ENCODE measurements at regions of chr4 and their contacts with region 1.

Region 1: DNA sequence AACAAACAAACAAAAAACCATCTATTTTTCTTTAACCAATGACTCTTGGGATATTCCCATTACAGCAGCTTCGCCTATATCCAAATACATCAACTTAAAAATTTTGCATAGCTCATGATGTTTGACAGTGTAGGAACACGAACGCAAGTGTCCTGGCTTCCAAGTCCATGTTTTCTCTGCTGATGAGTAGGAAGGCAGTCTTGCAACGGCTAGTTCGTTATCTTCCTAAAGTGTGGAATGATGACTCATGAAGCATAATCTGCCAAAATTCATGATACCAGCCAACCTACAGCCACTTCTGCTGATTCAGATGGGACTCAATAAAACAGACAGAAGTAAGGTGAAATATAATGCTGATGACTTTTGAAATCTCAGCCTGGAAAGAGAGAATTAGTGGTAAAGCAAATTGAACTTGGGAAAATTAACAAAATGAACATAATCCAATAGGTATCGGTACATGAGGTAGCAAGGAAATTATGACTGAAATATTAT is 6.4 kb upstream of the SEPTIN11 start:
- DNase-seq: peak; percentile 75
- ATAC-seq: 0 out of 2 replicates have a peak, but pooled peaks have one; percentile 8
- H3K4me3 ChIP-seq: no peak overlapping the region
- H3K27ac ChIP-seq: no peak overlapping the region
- H3K4me1 ChIP-seq: peaks cover 2% of the 10 kb centered on the region
- H3K27me3 ChIP-seq: no peaks in the 10 kb centered on the region
- CTCF ChIP-seq: no peak
- POLR2A ChIP-seq: no peak
- RAD21 ChIP-seq: no peak

Region 2: DNA sequence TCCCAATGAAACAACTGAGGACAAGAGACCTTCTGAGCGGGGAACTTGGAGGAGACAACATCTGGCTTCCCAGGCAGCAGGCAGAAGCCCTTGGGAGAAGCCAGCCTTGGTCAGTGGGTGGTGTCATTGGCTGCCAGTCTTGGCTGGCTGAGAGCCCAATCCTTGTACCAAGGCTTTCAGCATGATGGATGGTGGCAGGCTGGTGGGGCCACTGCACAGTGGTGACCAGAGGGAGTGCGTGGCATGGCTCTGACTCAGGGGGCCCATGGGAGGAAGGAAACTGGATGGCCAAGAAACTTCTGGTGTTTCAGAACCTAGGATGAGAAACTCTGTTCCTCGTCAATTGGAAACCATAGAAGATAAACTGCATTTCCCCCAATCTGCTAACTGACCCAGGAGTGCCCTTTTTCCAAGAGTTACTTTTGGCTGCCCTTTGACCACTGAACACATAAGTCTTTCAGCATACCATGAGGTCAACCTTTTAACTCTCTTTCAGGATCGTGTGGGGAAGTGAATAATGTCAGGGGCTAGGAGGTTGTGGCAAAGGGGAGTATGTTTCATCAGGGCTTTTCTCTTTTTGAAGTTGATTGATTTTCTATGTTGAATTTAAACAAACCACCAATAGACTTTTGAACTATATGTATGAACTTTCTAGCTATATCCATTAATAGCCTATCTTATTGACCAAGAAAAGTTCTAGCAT is 106.2 kb before region 1 on chr4:
- CTCF ChIA-PET with region 1: no interaction called
- POLR2A ChIA-PET with region 1: no interaction called
- dilution Hi-C with region 1: no loop called
- in situ Hi-C with region 1: no loop called
- intact Hi-C with region 1: no loop called
- DNase-seq: no peak
- ATAC-seq: no peak
- H3K4me3 ChIP-seq: no peak overlapping the region
- H3K27ac ChIP-seq: no peak overlapping the region
- H3K4me1 ChIP-seq: peaks cover 3% of the 10 kb centered on the region
- H3K27me3 ChIP-seq: no peaks in the 10 kb centered on the region
- CTCF ChIP-seq: no peak
- POLR2A ChIP-seq: no peak
- RAD21 ChIP-seq: no peak

Region 3: DNA sequence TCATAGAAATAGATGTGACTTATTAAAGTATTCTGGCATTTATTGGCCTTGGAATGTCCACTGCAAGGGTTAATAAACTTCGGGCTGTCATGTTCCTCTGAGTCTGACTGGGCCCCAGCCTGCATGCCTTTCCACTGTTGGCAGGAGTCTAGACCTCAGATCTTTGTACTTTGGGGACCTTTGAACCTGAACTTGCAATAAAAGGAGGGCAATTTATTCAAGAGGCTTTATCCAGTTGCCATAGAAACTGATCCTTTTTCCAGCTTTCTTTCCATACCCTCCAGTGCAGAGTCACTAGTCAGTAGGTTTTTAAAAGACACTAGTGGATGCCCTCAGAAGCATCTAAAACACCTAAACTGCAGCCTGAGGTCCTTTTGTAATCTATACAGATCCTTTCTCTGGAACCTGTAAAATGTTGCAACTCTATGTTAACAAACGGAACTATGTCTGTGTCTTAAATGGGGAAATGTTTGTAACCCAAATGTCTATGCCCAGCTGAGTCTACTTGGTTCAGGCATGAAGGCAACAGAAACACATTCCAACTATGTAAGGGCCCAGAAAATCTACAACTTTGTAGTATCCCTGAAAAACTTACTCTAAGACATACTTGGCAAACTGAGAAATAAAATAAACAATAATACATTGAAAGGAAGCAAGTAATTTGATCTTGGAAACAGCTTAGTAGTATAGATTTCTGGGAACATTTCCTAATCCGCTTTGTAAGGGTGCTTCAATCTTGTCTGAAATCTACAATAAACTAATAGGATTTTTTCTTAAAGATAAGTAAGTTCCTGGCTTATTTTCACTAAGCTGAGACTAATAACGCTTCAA is 86.7 kb before region 1 on chr4:
- CTCF ChIA-PET with region 1: no interaction called
- POLR2A ChIA-PET with region 1: no interaction called
- dilution Hi-C with region 1: no loop called
- in situ Hi-C with region 1: no loop called
- intact Hi-C with region 1: loop called (anchors 5 kb)
- DNase-seq: peak; percentile 74
- ATAC-seq: peak; percentile 91
- H3K4me3 ChIP-seq: no peak overlapping the region
- H3K27ac ChIP-seq: no peak overlapping the region
- H3K4me1 ChIP-seq: peaks cover 8% of the 10 kb centered on the region
- H3K27me3 ChIP-seq: no peaks in the 10 kb centered on the region
- CTCF ChIP-seq: no peak
- POLR2A ChIP-seq: no peak
- RAD21 ChIP-seq: no peak

Region 4: DNA sequence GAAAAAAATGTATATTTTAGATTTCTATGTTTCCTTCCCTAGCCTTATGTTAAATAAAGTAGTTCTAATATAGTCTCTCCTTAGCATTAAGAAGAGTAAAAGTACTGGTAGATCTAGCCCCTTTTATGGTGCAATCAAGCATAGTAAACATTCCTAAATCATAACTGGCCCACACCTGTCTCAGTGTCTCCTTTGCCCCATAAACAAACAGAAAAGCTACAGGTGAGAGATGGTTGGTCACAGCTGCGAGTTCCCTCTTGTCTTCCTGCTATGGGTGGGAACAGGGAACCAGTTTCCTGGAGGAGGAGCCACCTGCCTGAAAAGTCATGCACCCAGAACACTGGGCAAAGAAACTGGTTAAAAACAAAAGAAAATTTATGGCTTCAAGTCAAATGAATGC is 61.8 kb before region 1 on chr4:
- CTCF ChIA-PET with region 1: no interaction called
- POLR2A ChIA-PET with region 1: no interaction called
- dilution Hi-C with region 1: no loop called
- in situ Hi-C with region 1: no loop called
- intact Hi-C with region 1: loop called (anchors 5 kb)
- DNase-seq: no peak
- ATAC-seq: no peak
- H3K4me3 ChIP-seq: no peak overlapping the region
- H3K27ac ChIP-seq: no peak overlapping the region; the same call in 1 of the 2 replicates
- H3K4me1 ChIP-seq: peaks cover 5% of the 10 kb centered on the region; the same call in 1 of the 2 replicates
- H3K27me3 ChIP-seq: no peaks in the 10 kb centered on the region
- CTCF ChIP-seq: no peak
- POLR2A ChIP-seq: no peak
- RAD21 ChIP-seq: no peak